ENCODE measurements at regions of chr1 and their contacts with region 1.

Region 1: GRCh38 chr1:154404984-154405761 is at the start of gene IL6R:
- DNase-seq: peak; percentile 97
- H3K4me3 ChIP-seq: peak within 1 kb of the TSS; percentile 77 to 93 (median 85)
- H3K27ac ChIP-seq: peak within 1 kb of the TSS; percentile 97 to 100 (median 98)
- H3K4me1 ChIP-seq: peaks cover 45 to 53% (median 48%) of the 10 kb centered on the region in 4 donors
- H3K27me3 ChIP-seq: no peaks in the 10 kb centered on the region
- CTCF ChIP-seq: peak; percentile 60 to 87 (median 71)
- EP300 ChIP-seq: peak; percentile 14
- POLR2A ChIP-seq: peak; percentile 63
- total RNA-seq, gene IL6R: 44.4 to 61.1 (median 54.9) TPM

Region 2: DNA sequence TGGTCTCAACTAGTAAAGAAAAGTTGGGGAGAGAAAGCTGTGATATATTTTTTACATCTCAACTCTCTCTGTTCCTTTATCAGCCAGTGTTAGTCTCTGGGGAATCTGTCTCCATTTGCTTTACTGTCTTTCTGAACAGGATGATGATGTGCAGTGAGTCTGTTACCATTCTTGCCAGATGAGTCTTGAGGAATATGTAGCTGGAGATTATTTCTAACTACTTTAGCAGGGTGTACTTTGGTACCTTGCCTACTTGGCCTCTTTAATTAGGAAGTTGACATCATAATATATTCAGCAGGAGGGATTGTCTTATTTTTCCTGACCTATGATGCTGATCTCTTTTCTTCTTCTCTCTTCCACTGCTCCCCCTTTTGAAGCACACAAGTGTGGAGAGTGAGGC is 148.5 kb before region 1 on chr1:
- intact Hi-C with region 1: no loop called
- DNase-seq: no peak
- H3K4me3 ChIP-seq: no peak overlapping the region
- H3K27ac ChIP-seq: no peak overlapping the region
- H3K4me1 ChIP-seq: no peaks in the 10 kb centered on the region
- H3K27me3 ChIP-seq: no peaks in the 10 kb centered on the region
- CTCF ChIP-seq: no peak
- EP300 ChIP-seq: no peak
- POLR2A ChIP-seq: no peak

Region 3: GRCh38 chr1:154324669-154325582 is 80.2 kb before region 1 on chr1 and contains the start of gene ATP8B2:
- intact Hi-C with region 1: loop called (anchors 2 kb)
- DNase-seq: peak; percentile 95
- H3K4me3 ChIP-seq: peak within 1 kb of the TSS; percentile 88 to 99 (median 96)
- H3K27ac ChIP-seq: peak within 1 kb of the TSS; percentile 99 to 100 (median 99)
- H3K4me1 ChIP-seq: peaks cover 34 to 52% (median 50%) of the 10 kb centered on the region in 4 donors
- H3K27me3 ChIP-seq: no peaks in the 10 kb centered on the region
- CTCF ChIP-seq: peak; percentile 91 to 98 (median 96)
- EP300 ChIP-seq: no peak
- POLR2A ChIP-seq: no peak
- total RNA-seq, gene ATP8B2: 108 to 178 (median 128) TPM

Region 4: DNA sequence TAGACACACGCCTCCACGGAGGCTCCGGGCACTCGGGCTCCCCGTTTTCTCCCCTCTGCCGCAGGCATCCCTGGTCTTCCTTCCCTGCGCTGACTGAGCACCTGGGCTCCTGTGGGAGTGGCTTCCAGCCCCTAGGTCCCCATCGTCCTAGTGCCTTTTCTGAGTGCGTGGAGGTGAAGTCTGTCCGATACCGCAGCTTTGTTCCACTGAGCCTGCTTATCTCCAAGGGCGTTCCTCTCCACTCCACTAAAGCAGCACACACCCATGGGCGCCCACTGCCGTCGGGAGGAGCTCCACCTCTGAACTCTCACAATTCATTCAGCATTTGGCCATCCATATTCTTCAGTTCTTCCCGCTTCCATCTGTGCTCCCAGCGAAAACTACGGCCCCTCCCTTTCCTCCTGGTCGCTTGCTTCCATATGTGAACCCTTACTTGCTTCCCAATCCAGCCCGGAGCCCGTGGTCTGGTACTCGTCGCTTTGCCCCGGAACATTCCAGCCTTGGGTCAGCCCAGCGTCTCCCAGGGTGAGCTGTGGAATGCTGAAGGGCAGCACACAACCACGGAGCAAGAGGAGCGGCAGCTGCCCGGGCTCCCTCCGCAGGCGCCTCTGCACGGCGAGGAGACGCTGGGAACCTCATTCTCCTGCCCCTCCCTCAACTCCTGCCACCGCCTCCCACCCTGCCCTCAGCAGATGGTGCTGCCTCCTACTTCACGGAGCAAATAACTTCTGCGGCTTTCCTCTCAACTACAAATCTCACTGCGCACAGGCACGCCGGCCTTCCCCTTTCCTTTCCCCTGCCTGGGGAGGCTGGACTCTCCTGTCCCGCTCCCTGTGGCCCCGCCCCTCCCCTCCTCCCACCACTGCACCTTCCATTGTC is 52.4 kb before region 1 on chr1:
- intact Hi-C with region 1: loop called (anchors 10 kb)
- DNase-seq: no peak
- H3K4me3 ChIP-seq: peak overlapping the region; percentile 47 to 56 (median 50)
- H3K27ac ChIP-seq: peak overlapping the region; percentile 73 to 78 (median 75)
- H3K4me1 ChIP-seq: peaks cover 19 to 39% (median 31%) of the 10 kb centered on the region in 4 donors
- H3K27me3 ChIP-seq: no peaks in the 10 kb centered on the region
- CTCF ChIP-seq: peak in 1 of 3 experiments; percentile 2
- EP300 ChIP-seq: no peak
- POLR2A ChIP-seq: no peak

Region 5: GRCh38 chr1:154434346-154435085 is 29.3 kb after region 1 on chr1:
- intact Hi-C with region 1: loop called (anchors 2 kb)
- DNase-seq: peak; percentile 95
- H3K4me3 ChIP-seq: peak overlapping the region; percentile 26 to 43 (median 34)
- H3K27ac ChIP-seq: peak overlapping the region; percentile 86 to 91 (median 88)
- H3K4me1 ChIP-seq: peaks cover 58 to 100% (median 99%) of the 10 kb centered on the region in 4 donors
- H3K27me3 ChIP-seq: no peaks in the 10 kb centered on the region
- CTCF ChIP-seq: peak in 1 of 3 experiments; percentile 14
- EP300 ChIP-seq: peak; percentile 47
- POLR2A ChIP-seq: no peak

Region 6: GRCh38 chr1:154445040-154445472 is 39.9 kb after region 1 on chr1:
- intact Hi-C with region 1: loop called (anchors 5 kb)
- DNase-seq: no peak
- H3K4me3 ChIP-seq: no peak overlapping the region
- H3K27ac ChIP-seq: peak overlapping the region; percentile 85 to 90 (median 88)
- H3K4me1 ChIP-seq: peaks cover 13 to 93% (median 89%) of the 10 kb centered on the region in 4 donors
- H3K27me3 ChIP-seq: no peaks in the 10 kb centered on the region
- CTCF ChIP-seq: no peak
- EP300 ChIP-seq: no peak
- POLR2A ChIP-seq: no peak

Region 7: DNA sequence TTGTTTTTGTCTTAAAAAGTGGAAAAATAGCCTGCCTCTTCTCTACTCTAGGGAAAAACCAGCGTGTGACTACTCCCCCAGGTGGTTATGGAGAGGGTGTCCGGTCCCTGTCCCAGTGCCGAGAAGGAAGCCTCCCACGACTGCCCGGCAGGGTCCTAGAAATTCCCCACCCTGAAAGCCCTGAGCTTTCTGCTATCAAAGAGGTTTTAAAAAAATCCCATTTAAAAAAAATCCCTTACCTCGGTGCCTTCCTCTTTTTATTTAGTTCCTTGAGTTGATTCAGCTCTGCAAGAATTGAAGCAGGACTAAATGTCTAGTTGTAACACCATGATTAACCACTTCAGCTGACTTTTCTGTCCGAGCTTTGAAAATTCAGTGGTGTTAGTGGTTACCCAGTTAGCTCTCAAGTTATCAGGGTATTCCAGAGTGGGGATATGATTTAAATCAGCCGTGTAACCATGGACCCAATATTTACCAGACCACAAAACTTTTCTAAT is 61.8 kb after region 1 on chr1:
- intact Hi-C with region 1: loop called (anchors 5 kb)
- DNase-seq: no peak
- H3K4me3 ChIP-seq: no peak overlapping the region
- H3K27ac ChIP-seq: peak overlapping the region; percentile 84 to 89 (median 87)
- H3K4me1 ChIP-seq: peaks cover 20 to 83% (median 80%) of the 10 kb centered on the region in 4 donors
- H3K27me3 ChIP-seq: no peaks in the 10 kb centered on the region
- CTCF ChIP-seq: peak; percentile 48 to 57 (median 55)
- EP300 ChIP-seq: no peak
- POLR2A ChIP-seq: no peak

Region 8: GRCh38 chr1:154558575-154559465 is 153.6 kb after region 1 on chr1 and contains the start of gene UBE2Q1:
- intact Hi-C with region 1: loop called (anchors 10 kb)
- DNase-seq: peak; percentile 100
- H3K4me3 ChIP-seq: peak within 1 kb of the TSS; percentile 84 to 99 (median 92)
- H3K27ac ChIP-seq: peak within 1 kb of the TSS; percentile 92 to 96 (median 96)
- H3K4me1 ChIP-seq: peaks cover 19 to 51% (median 40%) of the 10 kb centered on the region in 4 donors
- H3K27me3 ChIP-seq: no peaks in the 10 kb centered on the region
- CTCF ChIP-seq: no peak
- EP300 ChIP-seq: no peak
- POLR2A ChIP-seq: peak; percentile 52
- total RNA-seq, gene UBE2Q1: 23.7 to 41.3 (median 31.3) TPM

Region 9: GRCh38 chr1:154614901-154615300 is 209.7 kb after region 1 on chr1:
- intact Hi-C with region 1: no loop called
- DNase-seq: no peak
- H3K4me3 ChIP-seq: no peak overlapping the region
- H3K27ac ChIP-seq: no peak overlapping the region
- H3K4me1 ChIP-seq: peaks cover 0 to 24% (median 12%) of the 10 kb centered on the region in 4 donors
- H3K27me3 ChIP-seq: no peaks in the 10 kb centered on the region
- CTCF ChIP-seq: no peak
- EP300 ChIP-seq: no peak
- POLR2A ChIP-seq: no peak

Measured in esophagus muscularis mucosa (tissue), 4 donors.